ENCODE measurements at regions of chr14 and their contacts with region 1.

Region 1: GRCh38 chr14:93206793-93207467 is at the starts of genes GON7 and UBR7:
- DNase-seq: peak; percentile 94
- CTCF ChIP-seq: peak; percentile 48

Region 2: DNA sequence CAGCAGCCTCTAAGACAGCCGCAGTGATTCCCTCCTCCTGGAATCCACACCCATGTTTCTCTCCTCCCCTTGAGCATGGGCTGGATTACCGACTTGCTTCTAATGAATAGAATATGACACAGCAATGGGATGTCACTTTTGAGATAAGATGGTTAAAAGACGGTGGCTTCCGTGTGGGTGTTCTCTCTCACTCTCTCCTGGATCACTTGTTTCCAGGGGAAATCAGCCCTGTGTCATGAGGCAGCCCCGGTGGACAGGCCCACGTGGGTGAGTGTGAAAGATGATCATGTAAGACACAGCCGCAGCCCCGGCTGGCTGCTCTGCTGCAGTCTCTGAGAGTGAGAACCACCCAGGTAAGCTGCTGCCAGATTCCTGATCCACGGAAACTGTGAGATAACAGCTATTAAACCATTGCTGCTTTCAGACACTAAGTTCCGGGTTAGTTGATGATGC is 33.0 kb before region 1 on chr14:
- CTCF ChIA-PET with region 1: interaction called, 38 read pairs
- POLR2A ChIA-PET with region 1: no interaction called
- DNase-seq: no peak
- CTCF ChIP-seq: no peak

Region 3: GRCh38 chr14:93184388-93185353 is 22.3 kb before region 1 on chr14 and contains the starts of genes LYSET and MOAP1:
- CTCF ChIA-PET with region 1: interaction called, 38 read pairs
- POLR2A ChIA-PET with region 1: interaction called, 9 read pairs
- DNase-seq: peak; percentile 94
- CTCF ChIP-seq: peak; percentile 27

Region 4: GRCh38 chr14:93195316-93195999 is 11.5 kb before region 1 on chr14:
- CTCF ChIA-PET with region 1: interaction called, 14 read pairs
- POLR2A ChIA-PET with region 1: interaction called, 6 read pairs
- DNase-seq: no peak
- CTCF ChIP-seq: no peak

Region 5: DNA sequence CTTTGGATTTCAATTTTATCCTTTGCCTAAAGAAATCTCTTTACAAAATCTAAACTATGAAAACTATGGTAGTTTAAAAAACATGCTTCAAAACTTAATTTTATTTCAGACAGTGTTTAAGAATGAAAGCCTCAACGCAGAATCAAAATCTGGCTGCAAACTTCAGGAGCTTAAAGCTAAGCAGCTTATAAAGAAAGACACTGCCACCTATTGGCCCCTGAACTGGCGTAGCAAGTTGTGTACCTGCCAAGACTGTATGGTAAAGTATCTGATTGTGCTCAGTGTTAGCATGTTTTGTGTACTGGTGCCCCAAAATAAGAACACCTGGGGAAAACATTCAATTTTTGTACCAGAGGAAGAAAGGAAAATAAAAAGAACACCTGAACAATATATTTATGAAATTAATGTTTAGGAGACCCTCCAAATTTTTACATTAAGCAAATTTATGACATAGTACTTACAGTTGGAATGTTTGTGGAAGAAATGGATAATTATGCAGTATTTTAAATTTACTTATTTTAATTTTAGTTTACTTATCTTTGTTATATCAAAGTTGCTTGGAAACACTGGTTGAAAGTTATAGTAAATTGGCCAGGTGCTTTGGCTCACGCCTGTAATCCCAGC is 12.3 kb after region 1 on chr14:
- CTCF ChIA-PET with region 1: interaction called, 15 read pairs
- POLR2A ChIA-PET with region 1: no interaction called
- DNase-seq: peak; percentile 63
- CTCF ChIP-seq: peak; percentile 80

Region 6: GRCh38 chr14:93536945-93537344 is 330.0 kb after region 1 on chr14:
- CTCF ChIA-PET with region 1: interaction called, 12 read pairs
- POLR2A ChIA-PET with region 1: no interaction called
- DNase-seq: no peak
- CTCF ChIP-seq: peak; percentile 31